ENCODE measurements at regions of chr14 and their contacts with region 1.

Region 1: DNA sequence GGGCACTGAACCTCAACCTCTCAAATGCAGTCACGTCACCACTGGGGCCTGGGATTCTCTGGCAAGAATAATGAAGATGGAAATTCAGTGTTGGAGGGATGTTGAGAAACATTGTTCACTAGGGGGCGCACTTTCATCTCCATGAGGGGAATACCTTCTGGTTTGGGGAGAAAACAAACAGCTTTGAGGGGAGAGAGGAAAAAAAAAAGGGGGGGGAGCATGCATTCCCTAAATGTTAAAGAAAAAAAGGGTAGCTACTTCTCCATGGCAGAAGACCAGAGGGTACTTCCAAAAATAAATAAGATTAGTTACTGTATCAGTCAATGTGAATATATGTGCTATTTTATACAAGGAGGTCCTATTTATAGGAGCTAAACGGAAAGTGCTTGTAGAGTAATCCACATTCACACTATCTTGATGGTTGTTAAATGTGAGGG is 5.8 kb upstream of the TBPL2 start:
- DNase-seq: peak; percentile 71
- ATAC-seq: peak; percentile 90
- H3K4me3 Mint-ChIP-seq: no peak overlapping the region
- H3K27ac Mint-ChIP-seq: no peak overlapping the region
- H3K4me1 Mint-ChIP-seq: peaks cover 8% of the 10 kb centered on the region
- H3K27me3 Mint-ChIP-seq: no peaks in the 10 kb centered on the region
- CTCF ChIP-seq: peak; percentile 71

Region 2: DNA sequence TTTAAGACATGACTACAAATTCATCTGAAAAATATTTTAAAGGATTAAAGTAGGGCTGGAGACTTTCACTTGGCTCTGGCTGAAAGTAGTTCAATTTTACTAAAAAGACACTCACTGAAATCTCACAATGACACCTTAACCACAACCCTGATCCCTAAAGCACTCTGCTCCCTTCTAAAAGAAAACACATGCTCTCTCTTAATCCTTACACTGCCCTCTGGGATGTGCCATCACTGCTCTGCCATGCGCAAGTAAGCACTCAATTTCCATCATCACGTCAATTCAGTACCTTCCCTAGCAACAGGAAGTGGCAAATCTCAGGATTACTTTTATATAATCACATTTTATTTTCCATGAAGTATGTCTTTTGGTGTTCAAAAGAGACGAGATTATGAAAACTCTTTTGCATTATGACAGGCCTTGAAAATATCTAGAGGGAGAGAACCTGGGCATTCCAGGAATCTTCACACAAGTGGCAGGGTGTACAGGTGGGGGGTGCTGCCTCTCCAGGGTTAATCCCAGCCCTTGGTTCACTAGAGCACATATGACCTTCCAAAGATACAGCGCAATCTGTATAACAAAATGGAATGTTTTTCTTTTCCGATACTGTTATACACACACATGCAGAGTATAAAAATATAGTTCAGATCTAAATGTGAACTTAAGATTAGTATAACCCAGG is 41.9 kb before region 1 on chr14:
- CTCF ChIA-PET with region 1: no interaction called
- POLR2A ChIA-PET with region 1: no interaction called
- DNase-seq: no peak
- ATAC-seq: no peak
- H3K4me3 Mint-ChIP-seq: no peak overlapping the region
- H3K27ac Mint-ChIP-seq: no peak overlapping the region
- H3K4me1 Mint-ChIP-seq: peaks cover 6% of the 10 kb centered on the region; the same call in 1 of the 2 replicates
- H3K27me3 Mint-ChIP-seq: no peaks in the 10 kb centered on the region
- CTCF ChIP-seq: no peak

Region 3: DNA sequence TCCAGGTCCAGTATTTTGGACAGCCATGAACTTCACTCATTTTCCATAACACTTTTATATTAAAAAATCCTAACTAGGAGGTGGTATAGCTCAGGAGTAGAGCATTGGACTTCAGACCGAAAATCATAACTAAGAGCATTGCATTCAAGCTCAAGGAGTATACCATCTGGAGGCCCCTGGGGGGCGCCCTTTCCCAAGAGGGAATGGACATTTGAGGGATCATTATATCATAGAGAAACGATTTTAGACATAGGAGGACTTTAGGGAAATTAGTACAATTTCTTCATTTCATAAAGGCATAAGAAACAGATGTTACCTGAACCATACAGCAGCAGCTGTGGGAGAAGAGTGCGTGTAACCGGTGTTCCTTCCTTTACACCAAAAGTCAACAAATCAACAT is 29.4 kb before region 1 on chr14:
- CTCF ChIA-PET with region 1: interaction called, 15 read pairs
- POLR2A ChIA-PET with region 1: no interaction called
- DNase-seq: peak; percentile 50
- ATAC-seq: peak; percentile 85
- H3K4me3 Mint-ChIP-seq: no peak overlapping the region
- H3K27ac Mint-ChIP-seq: no peak overlapping the region
- H3K4me1 Mint-ChIP-seq: peaks cover 9% of the 10 kb centered on the region
- H3K27me3 Mint-ChIP-seq: peaks cover 5% of the 10 kb centered on the region; the same call in 1 of the 2 replicates
- CTCF ChIP-seq: peak; percentile 79

Region 4: GRCh38 chr14:55430024-55430690 is 16.1 kb before region 1 on chr14:
- CTCF ChIA-PET with region 1: interaction called, 18 read pairs
- POLR2A ChIA-PET with region 1: no interaction called
- DNase-seq: no peak
- ATAC-seq: peak; percentile 81
- H3K4me3 Mint-ChIP-seq: no peak overlapping the region
- H3K27ac Mint-ChIP-seq: peak overlapping the region; percentile 95
- H3K4me1 Mint-ChIP-seq: peaks cover 15% of the 10 kb centered on the region
- H3K27me3 Mint-ChIP-seq: no peaks in the 10 kb centered on the region
- CTCF ChIP-seq: 0 out of 2 replicates have a peak, but pooled peaks have one; percentile 16

Region 5: DNA sequence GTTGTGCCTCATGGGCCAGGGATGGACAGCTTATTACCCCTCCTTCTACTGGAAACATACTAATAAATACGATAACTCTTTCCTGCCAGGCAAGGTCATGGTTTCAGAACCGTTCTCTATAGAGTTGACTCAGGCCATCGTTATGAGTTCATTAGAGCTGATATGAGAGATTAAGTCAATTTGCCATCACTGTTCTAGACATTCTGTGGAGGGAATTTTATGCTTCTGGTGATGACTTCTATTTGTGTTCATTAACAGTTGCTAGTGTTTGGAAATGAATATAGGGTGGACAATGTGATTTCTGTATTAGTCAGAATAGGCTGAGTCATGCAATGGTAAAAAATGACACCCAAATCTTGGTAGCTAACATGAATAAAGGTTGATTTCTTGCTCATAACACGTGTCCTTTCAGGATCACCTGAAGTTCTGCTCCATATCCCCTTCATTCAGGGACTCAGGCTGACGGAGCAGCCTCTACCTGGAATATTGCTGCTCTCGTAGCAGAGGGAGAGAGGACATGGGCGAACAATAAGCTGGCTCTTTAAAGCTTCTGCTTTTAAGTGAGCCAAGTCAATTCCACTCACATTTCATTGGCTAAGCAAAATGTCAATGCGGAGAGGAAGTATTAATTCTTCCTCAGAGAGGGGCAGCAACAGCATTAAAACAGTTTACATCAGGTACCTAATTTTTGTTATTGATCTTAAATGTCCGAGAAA is 12.7 kb after region 1 on chr14:
- CTCF ChIA-PET with region 1: interaction called, 28 read pairs
- POLR2A ChIA-PET with region 1: no interaction called
- DNase-seq: no peak
- ATAC-seq: no peak
- H3K4me3 Mint-ChIP-seq: no peak overlapping the region
- H3K27ac Mint-ChIP-seq: no peak overlapping the region
- H3K4me1 Mint-ChIP-seq: peaks cover 10% of the 10 kb centered on the region
- H3K27me3 Mint-ChIP-seq: peaks cover 3% of the 10 kb centered on the region; the same call in 1 of the 2 replicates
- CTCF ChIP-seq: no peak

Region 6: DNA sequence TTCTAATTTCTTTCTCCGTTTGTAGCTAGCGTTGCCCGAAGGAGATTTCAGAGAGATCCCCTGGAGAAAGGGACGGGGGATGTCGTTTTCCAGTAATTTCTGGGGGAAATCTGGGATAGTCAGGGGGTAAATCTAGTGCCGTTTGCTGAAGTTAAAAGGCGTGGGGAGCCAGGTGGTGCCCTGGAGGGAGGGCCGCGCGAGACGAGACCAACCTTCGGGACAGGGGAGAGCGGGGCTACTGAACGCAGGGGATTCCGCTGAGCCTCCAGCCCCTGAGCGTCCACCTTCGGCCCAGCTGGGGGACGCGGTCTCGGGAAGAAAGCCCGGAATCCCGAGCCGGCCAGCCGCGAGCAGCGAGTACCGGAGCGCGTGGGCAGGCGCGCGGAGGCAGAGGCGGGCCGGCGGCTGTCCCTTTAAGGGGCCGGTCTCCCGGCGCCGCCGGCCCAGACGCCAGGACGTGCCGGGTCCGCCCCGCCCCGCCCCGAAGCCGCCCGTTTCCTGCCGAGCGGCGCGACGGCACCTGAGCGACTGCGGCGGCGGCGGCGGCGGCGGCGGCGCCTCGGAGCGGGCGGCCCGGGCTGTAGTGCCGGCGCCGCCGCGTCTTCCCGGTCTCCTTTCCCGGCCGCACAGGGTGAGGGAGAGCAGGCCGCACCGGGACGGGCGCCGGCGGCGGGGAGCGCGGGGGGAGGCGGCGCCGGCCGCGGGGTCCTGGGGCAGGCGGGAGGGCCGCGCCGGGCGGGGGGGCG is 133.7 kb after region 1 on chr14 and contains the start of gene KTN1:
- CTCF ChIA-PET with region 1: interaction called, 11 read pairs
- POLR2A ChIA-PET with region 1: no interaction called
- DNase-seq: peak; percentile 72
- ATAC-seq: peak; percentile 83
- H3K4me3 Mint-ChIP-seq: peak within 1 kb of the TSS; percentile 93
- H3K27ac Mint-ChIP-seq: peak within 1 kb of the TSS; percentile 94
- H3K4me1 Mint-ChIP-seq: peaks cover 20% of the 10 kb centered on the region
- H3K27me3 Mint-ChIP-seq: no peaks in the 10 kb centered on the region
- CTCF ChIP-seq: no peak
- total RNA-seq, gene KTN1: 122 to 125 TPM (median 123 TPM) in 3 replicates

Region 7: GRCh38 chr14:55641954-55642353 is 195.7 kb after region 1 on chr14:
- CTCF ChIA-PET with region 1: interaction called, 14 read pairs
- POLR2A ChIA-PET with region 1: no interaction called
- DNase-seq: no peak
- ATAC-seq: peak; percentile 58
- H3K4me3 Mint-ChIP-seq: no peak overlapping the region; the same call in 1 of the 2 replicates
- H3K27ac Mint-ChIP-seq: no peak overlapping the region
- H3K4me1 Mint-ChIP-seq: peaks cover 26% of the 10 kb centered on the region
- H3K27me3 Mint-ChIP-seq: no peaks in the 10 kb centered on the region
- CTCF ChIP-seq: no peak

Region 8: DNA sequence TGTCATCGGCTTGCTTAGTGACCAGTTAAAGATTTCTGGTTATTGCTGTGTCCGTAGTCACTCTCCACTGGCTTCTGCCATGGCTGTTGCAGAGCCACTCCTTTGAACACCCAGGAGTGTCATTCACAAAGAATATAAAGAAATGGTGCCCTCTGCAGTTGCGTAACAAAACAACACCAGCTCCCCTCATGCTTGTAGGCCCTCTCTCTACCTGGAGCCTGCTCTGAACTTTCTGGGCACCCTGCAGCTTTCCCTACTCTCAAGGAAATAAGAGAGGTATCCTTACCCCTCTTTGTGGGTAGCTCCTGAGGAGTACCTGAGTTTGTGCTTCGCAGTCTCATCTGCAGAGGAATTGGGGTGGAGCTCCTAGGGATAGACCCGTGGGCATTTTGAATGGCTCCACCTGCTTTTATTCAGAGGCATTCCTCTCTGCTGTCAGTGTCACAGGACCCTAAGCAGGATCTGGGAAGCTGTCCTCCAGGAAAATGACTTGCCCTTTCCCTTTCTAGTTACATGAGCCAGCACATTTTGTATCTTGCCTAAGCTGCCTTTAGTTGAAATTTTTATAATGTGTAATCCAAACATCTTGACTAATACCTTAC is 1036.2 kb after region 1 on chr14:
- CTCF ChIA-PET with region 1: interaction called, 11 read pairs
- POLR2A ChIA-PET with region 1: no interaction called
- DNase-seq: peak; percentile 58
- ATAC-seq: peak; percentile 96
- H3K4me3 Mint-ChIP-seq: no peak overlapping the region
- H3K27ac Mint-ChIP-seq: no peak overlapping the region
- H3K4me1 Mint-ChIP-seq: peaks cover 8% of the 10 kb centered on the region
- H3K27me3 Mint-ChIP-seq: no peaks in the 10 kb centered on the region
- CTCF ChIP-seq: no peak; the same call in none of the 2 replicates

Measured in WTC11 (cell line).